ENCODE measurements at regions of chr20 and their contacts with region 1.

Region 1: GRCh38 chr20:51639206-51639832 is 96.8 kb upstream of the NFATC2 start:
- DNase-seq: peak; percentile 87 to 91
- H3K4me3 ChIP-seq: no peak overlapping the region
- H3K4me3 Mint-ChIP-seq: no peak overlapping the region
- H3K27ac Mint-ChIP-seq: peak overlapping the region; percentile 26
- H3K4me1 ChIP-seq: no peaks in the 10 kb centered on the region
- H3K4me1 Mint-ChIP-seq: peaks cover 6% of the 10 kb centered on the region
- H3K27me3 ChIP-seq: no peaks in the 10 kb centered on the region
- H3K27me3 Mint-ChIP-seq: no peaks in the 10 kb centered on the region
- CTCF ChIP-seq: peak; percentile 99 to 100

Region 2: DNA sequence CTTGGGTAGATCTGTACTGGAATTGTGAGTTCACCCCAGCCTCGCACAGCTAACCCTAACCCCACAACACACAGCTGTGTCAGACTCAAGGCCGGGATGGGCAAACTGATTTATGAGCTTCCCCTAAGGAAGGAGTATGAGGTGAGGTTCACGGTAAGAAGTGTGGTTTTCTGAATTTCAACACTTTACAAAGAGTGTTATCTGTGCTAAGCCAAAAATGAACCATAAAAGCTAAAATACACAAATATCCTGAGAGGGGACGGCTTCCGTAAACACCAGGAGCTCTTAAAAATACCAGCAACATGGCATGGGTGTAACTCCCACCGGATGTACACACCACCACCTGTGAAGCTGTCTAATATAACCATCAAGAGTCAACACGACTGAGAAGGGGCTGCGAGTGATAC is 27.7 kb after region 1 on chr20:
- CTCF ChIA-PET with region 1: interaction called, 15 read pairs
- POLR2A ChIA-PET with region 1: no interaction called
- intact Hi-C with region 1: loop called (anchors 2 kb)
- DNase-seq: peak; percentile 76 to 82
- H3K4me3 ChIP-seq: no peak overlapping the region
- H3K4me3 Mint-ChIP-seq: no peak overlapping the region
- H3K27ac Mint-ChIP-seq: peak overlapping the region; percentile 8
- H3K4me1 ChIP-seq: peaks cover 36% of the 10 kb centered on the region
- H3K4me1 Mint-ChIP-seq: peaks cover 36% of the 10 kb centered on the region
- H3K27me3 ChIP-seq: no peaks in the 10 kb centered on the region
- H3K27me3 Mint-ChIP-seq: no peaks in the 10 kb centered on the region
- CTCF ChIP-seq: no peak

Region 3: DNA sequence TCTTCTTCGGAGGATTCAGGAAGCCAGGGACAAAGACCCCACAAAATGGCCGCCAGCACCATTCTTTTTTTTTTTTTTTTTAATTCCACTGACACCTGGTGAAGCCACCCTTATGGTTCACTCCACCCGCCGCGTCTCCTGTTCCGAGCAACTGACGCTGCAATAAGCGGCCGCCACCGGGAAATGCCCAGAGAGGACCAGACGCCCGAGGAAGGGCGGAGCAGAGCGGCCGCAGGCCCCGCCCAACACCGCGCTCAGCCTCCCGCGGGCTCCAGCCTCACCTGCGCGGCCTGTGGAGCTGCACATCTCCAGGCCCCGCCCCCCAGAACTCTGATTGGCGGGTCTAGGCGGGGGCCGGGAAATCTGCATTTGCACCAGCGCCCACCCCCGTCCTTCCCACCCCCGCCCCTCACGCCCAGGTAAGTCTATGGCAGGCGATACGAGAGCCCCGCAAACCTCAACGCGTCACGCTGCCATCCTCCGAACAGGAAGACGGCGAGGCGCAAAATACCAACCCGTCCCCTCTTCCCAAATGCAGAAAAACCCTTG is 127.8 kb after region 1 on chr20:
- CTCF ChIA-PET with region 1: interaction called, 3 read pairs
- POLR2A ChIA-PET with region 1: no interaction called
- intact Hi-C with region 1: loop called (anchors 5 kb)
- DNase-seq: peak; percentile 99
- H3K4me3 ChIP-seq: peak overlapping the region; percentile 95
- H3K4me3 Mint-ChIP-seq: peak overlapping the region; percentile 84
- H3K27ac Mint-ChIP-seq: peak overlapping the region; percentile 80
- H3K4me1 ChIP-seq: peaks cover 15% of the 10 kb centered on the region
- H3K4me1 Mint-ChIP-seq: peaks cover 17% of the 10 kb centered on the region
- H3K27me3 ChIP-seq: no peaks in the 10 kb centered on the region
- H3K27me3 Mint-ChIP-seq: no peaks in the 10 kb centered on the region
- CTCF ChIP-seq: no peak

Region 4: GRCh38 chr20:52060794-52061714 is 421.7 kb after region 1 on chr20:
- CTCF ChIA-PET with region 1: interaction called, 5 read pairs
- POLR2A ChIA-PET with region 1: no interaction called
- intact Hi-C with region 1: loop called (anchors 1 kb)
- DNase-seq: peak; percentile 83 to 86
- H3K4me3 ChIP-seq: no peak overlapping the region
- H3K4me3 Mint-ChIP-seq: no peak overlapping the region
- H3K27ac Mint-ChIP-seq: peak overlapping the region; percentile 12
- H3K4me1 ChIP-seq: peaks cover 8% of the 10 kb centered on the region; the same call in 1 of the 2 replicates
- H3K4me1 Mint-ChIP-seq: peaks cover 8% of the 10 kb centered on the region
- H3K27me3 ChIP-seq: no peaks in the 10 kb centered on the region
- H3K27me3 Mint-ChIP-seq: no peaks in the 10 kb centered on the region
- CTCF ChIP-seq: peak; percentile 95 to 98

Region 5: DNA sequence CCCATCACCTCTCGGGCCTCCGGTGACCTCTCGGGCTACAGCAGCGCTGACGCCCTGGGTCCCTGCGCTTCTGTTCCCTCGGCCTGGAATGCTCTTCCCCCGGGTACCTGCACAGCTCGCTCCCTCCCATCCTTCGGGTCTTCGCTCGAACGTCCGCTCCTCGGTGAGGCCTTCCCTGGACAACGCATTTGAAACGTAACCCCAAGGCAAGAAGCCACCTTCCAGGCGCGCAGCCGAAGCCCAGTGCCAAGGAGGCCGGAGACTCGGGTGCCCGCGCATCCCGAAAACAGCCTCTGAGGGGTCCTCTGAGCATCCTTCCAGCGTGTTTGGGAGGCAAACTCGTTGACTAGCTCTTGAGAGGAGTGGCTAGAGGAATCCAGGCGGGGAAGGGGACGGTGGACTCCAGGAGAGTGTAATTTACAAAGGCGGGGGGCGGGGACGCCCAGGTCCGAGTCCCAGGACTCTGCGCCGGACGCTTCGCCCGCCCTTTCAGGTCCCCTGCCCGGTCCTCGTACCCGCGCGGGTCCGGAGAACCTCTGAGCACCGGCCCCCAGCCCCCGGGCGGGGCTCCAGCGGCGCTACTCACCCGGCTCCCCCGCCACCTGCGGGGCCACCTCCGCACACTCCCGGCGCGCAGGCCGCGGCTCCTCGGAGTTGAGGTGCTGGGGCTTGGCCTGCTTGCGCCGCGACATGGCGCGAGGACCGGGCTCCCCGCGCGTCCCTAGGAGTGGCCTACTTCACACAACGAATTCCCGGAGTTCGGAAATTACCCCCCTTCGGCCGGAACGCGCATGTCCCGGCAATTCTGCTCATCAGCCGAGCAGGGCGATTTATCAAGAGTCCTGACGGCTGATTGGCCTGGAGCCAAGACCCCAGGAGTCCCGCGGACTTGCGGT is 465.5 kb after region 1 on chr20:
- CTCF ChIA-PET with region 1: interaction called, 10 read pairs
- POLR2A ChIA-PET with region 1: no interaction called
- intact Hi-C with region 1: no loop called
- DNase-seq: peak in 1 of 2 experiments; percentile 31
- H3K4me3 ChIP-seq: peak overlapping the region; percentile 28
- H3K4me3 Mint-ChIP-seq: peak overlapping the region; percentile 65
- H3K27ac Mint-ChIP-seq: no peak overlapping the region
- H3K4me1 ChIP-seq: no peaks in the 10 kb centered on the region
- H3K4me1 Mint-ChIP-seq: no peaks in the 10 kb centered on the region
- H3K27me3 ChIP-seq: no peaks in the 10 kb centered on the region
- H3K27me3 Mint-ChIP-seq: no peaks in the 10 kb centered on the region
- CTCF ChIP-seq: no peak